PC-9 (cell line): ENCODE measurements at regions of chrX and their contacts with region 1.

Region 1: DNA sequence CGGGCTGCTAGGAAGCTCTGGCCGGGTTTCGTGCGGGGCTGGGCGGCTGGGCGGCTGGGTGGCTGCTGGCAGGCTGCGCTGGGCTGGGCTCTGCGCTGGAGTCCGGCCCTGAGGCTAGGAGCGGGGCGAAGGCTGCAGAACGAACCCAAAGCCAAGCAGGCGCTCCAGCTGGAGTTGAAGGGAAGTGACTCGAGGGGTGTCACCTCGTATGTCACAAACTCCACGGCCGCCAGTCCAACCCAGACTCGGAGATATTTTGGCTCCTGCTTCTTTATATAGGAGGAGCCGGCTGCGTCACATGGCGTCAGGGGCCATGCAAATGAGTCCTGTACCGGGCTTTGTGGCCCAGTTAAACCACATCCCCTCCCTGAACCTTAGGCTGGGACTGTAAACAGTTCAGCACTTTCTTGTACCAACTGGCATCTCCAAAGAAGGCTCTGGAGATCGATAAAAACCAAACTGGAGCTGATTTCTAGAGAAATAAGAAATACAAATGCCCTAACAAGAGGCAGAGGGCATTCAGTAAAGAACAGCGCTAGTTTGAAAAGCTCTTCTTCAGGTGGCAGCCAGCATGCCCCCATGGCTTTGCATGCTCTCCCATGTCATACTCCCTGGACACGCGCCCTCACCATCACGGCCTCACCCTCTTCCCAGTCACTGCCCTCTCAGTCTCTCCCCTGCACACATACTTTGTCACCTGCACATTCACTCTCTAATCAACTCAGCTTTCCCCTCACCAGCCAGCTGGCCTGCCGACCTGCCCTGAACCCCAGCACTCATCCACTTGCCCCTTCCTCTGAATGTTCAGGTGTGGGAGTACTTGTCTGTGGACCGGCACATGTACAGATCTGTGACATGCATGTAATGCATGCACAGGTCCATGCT is 58.5 kb downstream of the TSC22D3 start:
- DNase-seq: peak; percentile 74 to 80
- H3K4me3 ChIP-seq: peak overlapping the region; percentile 91
- H3K27ac ChIP-seq: 0 out of 2 replicates have a peak overlapping the region, but pooled peaks have one; percentile 95
- H3K4me1 ChIP-seq: peaks cover 43% of the 10 kb centered on the region
- H3K27me3 ChIP-seq: no peaks in the 10 kb centered on the region
- CTCF ChIP-seq: no peak

Region 2: GRCh38 chrX:107537815-107538214 is 179.2 kb before region 1 on chrX:
- CTCF ChIA-PET with region 1: no interaction called
- POLR2A ChIA-PET with region 1: no interaction called
- intact Hi-C with region 1: loop called (anchors 5 kb)
- DNase-seq: peak; percentile 40 to 52
- H3K4me3 ChIP-seq: no peak overlapping the region
- H3K27ac ChIP-seq: no peak overlapping the region
- H3K4me1 ChIP-seq: peaks cover 3% of the 10 kb centered on the region; the same call in 1 of the 2 replicates
- H3K27me3 ChIP-seq: no peaks in the 10 kb centered on the region
- CTCF ChIP-seq: peak; percentile 88

Region 3: DNA sequence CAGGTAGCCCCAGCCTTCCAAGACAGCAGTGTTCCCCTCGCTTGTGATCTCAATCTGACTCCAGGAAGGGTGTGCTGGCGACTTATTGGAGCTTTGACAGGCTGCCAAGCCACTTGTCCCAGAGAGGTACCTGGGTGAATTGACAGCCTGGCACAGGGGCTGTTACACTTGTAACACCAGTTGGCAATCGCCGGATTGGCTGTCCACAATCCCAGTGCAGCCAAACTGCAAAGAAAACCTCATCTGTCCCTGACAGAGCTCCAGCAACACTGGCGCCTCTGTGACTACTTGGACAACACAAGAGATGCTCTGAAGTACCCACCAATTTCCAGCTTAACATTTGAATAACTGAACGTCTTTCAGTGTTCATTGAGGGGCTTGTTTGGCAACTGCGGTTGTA is 165.5 kb before region 1 on chrX:
- CTCF ChIA-PET with region 1: no interaction called
- POLR2A ChIA-PET with region 1: no interaction called
- intact Hi-C with region 1: no loop called
- DNase-seq: no peak
- H3K4me3 ChIP-seq: no peak overlapping the region
- H3K27ac ChIP-seq: no peak overlapping the region
- H3K4me1 ChIP-seq: no peaks in the 10 kb centered on the region
- H3K27me3 ChIP-seq: no peaks in the 10 kb centered on the region
- CTCF ChIP-seq: no peak

Region 4: GRCh38 chrX:107672955-107673378 is 44.1 kb before region 1 on chrX:
- CTCF ChIA-PET with region 1: interaction called, 21 read pairs
- POLR2A ChIA-PET with region 1: interaction called, 12 read pairs
- intact Hi-C with region 1: loop called (anchors 1 kb)
- DNase-seq: peak; percentile 56 to 70
- H3K4me3 ChIP-seq: no peak overlapping the region; the same call in 1 of the 2 replicates
- H3K27ac ChIP-seq: no peak overlapping the region
- H3K4me1 ChIP-seq: peaks cover 49% of the 10 kb centered on the region
- H3K27me3 ChIP-seq: no peaks in the 10 kb centered on the region
- CTCF ChIP-seq: peak; percentile 82

Region 5: DNA sequence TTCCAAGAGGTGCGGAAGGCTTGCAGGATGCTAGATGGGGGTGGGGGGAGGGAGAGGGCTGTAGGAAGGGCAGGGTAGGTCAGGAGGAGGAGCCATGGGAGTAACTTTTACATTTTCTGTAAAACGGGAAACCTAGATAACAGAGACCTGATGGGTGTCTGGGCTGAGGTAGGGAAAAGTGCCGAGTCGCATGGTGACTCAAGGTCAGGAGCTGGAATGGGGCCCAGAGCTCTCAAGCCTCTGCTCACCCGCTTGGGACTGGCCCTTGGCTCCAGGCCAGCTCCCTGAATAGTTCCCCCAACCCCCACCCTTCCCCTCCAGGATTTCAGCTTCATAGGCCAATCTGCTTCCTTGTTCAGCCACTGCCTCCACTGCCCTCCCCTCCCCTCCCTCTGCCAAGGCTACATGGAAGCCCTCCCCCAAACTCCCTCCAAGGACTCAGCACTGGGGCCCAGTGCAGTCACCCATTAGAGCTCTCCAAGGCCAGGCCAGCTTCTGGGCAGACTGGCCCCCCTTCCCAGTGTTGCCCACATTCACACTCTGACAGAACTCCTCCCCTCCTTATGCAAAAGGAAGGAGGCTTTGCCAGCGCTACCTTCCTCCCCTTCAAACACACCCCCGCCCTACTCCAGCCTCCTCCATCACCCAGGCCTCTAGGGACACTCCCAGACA is 14.9 kb after region 1 on chrX:
- CTCF ChIA-PET with region 1: interaction called, 10 read pairs
- POLR2A ChIA-PET with region 1: interaction called, 22 read pairs
- intact Hi-C with region 1: loop called (anchors 1 kb)
- DNase-seq: peak; percentile 93 to 95
- H3K4me3 ChIP-seq: no peak overlapping the region
- H3K27ac ChIP-seq: peak overlapping the region; percentile 63
- H3K4me1 ChIP-seq: peaks cover 81% of the 10 kb centered on the region
- H3K27me3 ChIP-seq: no peaks in the 10 kb centered on the region
- CTCF ChIP-seq: no peak

Region 6: DNA sequence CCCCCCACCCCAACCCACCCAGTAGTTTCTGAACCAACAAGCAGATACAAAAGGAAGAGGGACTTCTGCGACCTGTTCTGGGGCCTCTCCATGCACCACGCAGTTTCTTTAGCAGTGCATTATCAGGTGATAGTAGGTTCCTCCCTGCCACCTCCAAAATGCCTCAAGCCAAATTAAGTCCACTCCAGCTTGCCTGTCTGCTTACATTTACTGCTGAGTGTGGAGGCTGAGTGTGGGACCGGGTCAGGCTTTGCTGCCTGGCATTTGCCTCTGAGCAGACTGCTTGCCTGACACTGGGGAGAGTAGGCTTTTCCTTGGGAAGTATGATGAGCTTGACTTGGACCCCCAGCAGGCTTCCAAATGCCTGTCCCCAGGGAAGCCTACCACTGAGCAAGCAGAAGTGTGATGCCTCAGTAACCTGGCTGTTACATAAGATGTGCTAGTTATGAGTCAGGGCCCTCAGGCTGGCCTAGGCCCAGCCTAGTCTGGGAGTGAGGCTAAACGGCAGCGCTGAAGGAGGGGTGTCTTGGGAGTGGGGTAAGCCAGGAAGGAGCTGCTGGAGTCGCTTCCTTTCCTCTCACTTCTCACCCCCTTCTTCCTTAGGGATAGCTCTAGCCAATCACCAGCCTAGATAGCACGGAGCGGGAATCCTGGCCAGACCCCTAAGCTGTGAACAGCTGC is 49.6 kb after region 1 on chrX:
- CTCF ChIA-PET with region 1: interaction called, 4 read pairs
- POLR2A ChIA-PET with region 1: interaction called, 4 read pairs
- intact Hi-C with region 1: loop called (anchors 2 kb)
- DNase-seq: peak; percentile 61 to 88
- H3K4me3 ChIP-seq: peak overlapping the region; percentile 4; the same call in 1 of the 2 replicates
- H3K27ac ChIP-seq: peak overlapping the region; percentile 61
- H3K4me1 ChIP-seq: peaks cover 52% of the 10 kb centered on the region
- H3K27me3 ChIP-seq: no peaks in the 10 kb centered on the region
- CTCF ChIP-seq: no peak

Region 7: DNA sequence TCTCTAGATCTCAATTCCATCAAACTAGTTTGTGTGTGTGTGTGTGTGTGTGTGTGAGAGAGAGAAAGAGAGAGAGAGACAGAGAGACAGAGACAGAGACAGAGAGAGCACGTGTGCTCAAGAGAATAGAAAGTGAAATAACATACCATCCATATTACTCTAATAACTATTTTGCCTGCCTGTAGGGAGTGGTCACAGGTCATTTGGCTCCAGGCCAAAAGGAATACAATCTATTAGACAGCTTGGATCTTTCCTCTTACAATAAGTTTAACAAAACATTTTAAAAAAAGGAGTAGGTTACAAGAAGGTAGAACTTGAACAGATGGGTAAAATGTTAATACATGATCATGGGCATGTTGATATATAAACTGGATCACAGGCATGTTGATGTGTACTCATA is 645.0 kb after region 1 on chrX:
- CTCF ChIA-PET with region 1: no interaction called
- POLR2A ChIA-PET with region 1: no interaction called
- intact Hi-C with region 1: no loop called
- DNase-seq: no peak
- H3K4me3 ChIP-seq: no peak overlapping the region
- H3K27ac ChIP-seq: no peak overlapping the region
- H3K4me1 ChIP-seq: no peaks in the 10 kb centered on the region
- H3K27me3 ChIP-seq: no peaks in the 10 kb centered on the region
- CTCF ChIP-seq: no peak